CD4-positive, alpha-beta memory T cell (primary cell): ENCODE measurements at regions of chr22 and their contacts with region 1.

Region 1: GRCh38 chr22:19909350-19910179 is 32.0 kb upstream of the COMT start:
- DNase-seq: peak; percentile 73 to 77 (median 76)
- H3K4me3 ChIP-seq: no peak overlapping the region
- H3K4me3 Mint-ChIP-seq: peak overlapping the region in 2 of 8 donors; percentile 13 to 53
- H3K27ac ChIP-seq: no peak overlapping the region
- H3K27ac Mint-ChIP-seq: peak overlapping the region in 6 of 7 donors; percentile 22 to 92 (median 71)
- H3K4me1 ChIP-seq: peaks cover 7% of the 10 kb centered on the region
- H3K4me1 Mint-ChIP-seq: peaks cover 2 to 6% (median 5%) of the 10 kb centered on the region in 4 donors
- H3K27me3 ChIP-seq: no peaks in the 10 kb centered on the region
- H3K27me3 Mint-ChIP-seq: no peaks in the 10 kb centered on the region

Region 2: GRCh38 chr22:19756288-19757128 is 153.1 kb before region 1 on chr22:
- CTCF ChIA-PET with region 1: interaction called, 61 read pairs
- POLR2A ChIA-PET with region 1: interaction called, 8 read pairs
- intact Hi-C with region 1: loop called (anchors 1 kb)
- DNase-seq: peak; percentile 61 to 70 (median 66)
- H3K4me3 ChIP-seq: peak overlapping the region in 1 of 2 donors; percentile 47
- H3K4me3 Mint-ChIP-seq: peak overlapping the region; percentile 55 to 83 (median 70)
- H3K27ac ChIP-seq: no peak overlapping the region
- H3K27ac Mint-ChIP-seq: no peak overlapping the region
- H3K4me1 ChIP-seq: peaks cover 33% of the 10 kb centered on the region
- H3K4me1 Mint-ChIP-seq: peaks cover 19 to 39% (median 27%) of the 10 kb centered on the region in 4 donors
- H3K27me3 ChIP-seq: peaks cover 22% of the 10 kb centered on the region
- H3K27me3 Mint-ChIP-seq: peaks cover 37 to 38% of the 10 kb centered on the region in 2 donors

Region 3: GRCh38 chr22:19896665-19897355 is 12.8 kb before region 1 on chr22:
- CTCF ChIA-PET with region 1: interaction called, 11 read pairs
- POLR2A ChIA-PET with region 1: interaction called, 6 read pairs
- intact Hi-C with region 1: loop called (anchors 2 kb)
- DNase-seq: no peak
- H3K4me3 ChIP-seq: no peak overlapping the region
- H3K4me3 Mint-ChIP-seq: no peak overlapping the region
- H3K27ac ChIP-seq: no peak overlapping the region
- H3K27ac Mint-ChIP-seq: peak overlapping the region in 1 of 7 donors; percentile 77
- H3K4me1 ChIP-seq: peaks cover 37% of the 10 kb centered on the region
- H3K4me1 Mint-ChIP-seq: peaks cover 13 to 54% (median 23%) of the 10 kb centered on the region in 4 donors
- H3K27me3 ChIP-seq: no peaks in the 10 kb centered on the region
- H3K27me3 Mint-ChIP-seq: no peaks in the 10 kb centered on the region